A673 (cell line): ENCODE measurements at regions of chr1 and their contacts with region 1.

Region 1: GRCh38 chr1:186845576-186846210 is 16.9 kb downstream of the PLA2G4A start:
- DNase-seq: peak; percentile 52
- H3K4me3 ChIP-seq: peak overlapping the region; percentile 5
- H3K27ac ChIP-seq: peak overlapping the region; percentile 70
- H3K4me1 ChIP-seq: peaks cover 81% of the 10 kb centered on the region
- H3K27me3 ChIP-seq: no peaks in the 10 kb centered on the region
- CTCF ChIP-seq: no peak

Region 2: GRCh38 chr1:186880982-186881381 is 35.3 kb after region 1 on chr1:
- CTCF ChIA-PET with region 1: no interaction called
- POLR2A ChIA-PET with region 1: no interaction called
- intact Hi-C with region 1: loop called (anchors 1 kb)
- DNase-seq: peak; percentile 85
- H3K4me3 ChIP-seq: peak overlapping the region; percentile 31
- H3K27ac ChIP-seq: peak overlapping the region; percentile 77
- H3K4me1 ChIP-seq: peaks cover 53% of the 10 kb centered on the region
- H3K27me3 ChIP-seq: no peaks in the 10 kb centered on the region
- CTCF ChIP-seq: no peak

Region 3: GRCh38 chr1:186974774-186975181 is 129.1 kb after region 1 on chr1:
- CTCF ChIA-PET with region 1: no interaction called
- POLR2A ChIA-PET with region 1: no interaction called
- intact Hi-C with region 1: loop called (anchors 5 kb)
- DNase-seq: peak; percentile 79
- H3K4me3 ChIP-seq: peak overlapping the region; percentile 19
- H3K27ac ChIP-seq: peak overlapping the region; percentile 66
- H3K4me1 ChIP-seq: peaks cover 34% of the 10 kb centered on the region
- H3K27me3 ChIP-seq: no peaks in the 10 kb centered on the region
- CTCF ChIP-seq: no peak